Activated B cell treated with CpG ODN at 0.5 μM for 24 hours (primary cell): ENCODE measurements at regions of chr11 and their contacts with region 1.

Region 1: DNA sequence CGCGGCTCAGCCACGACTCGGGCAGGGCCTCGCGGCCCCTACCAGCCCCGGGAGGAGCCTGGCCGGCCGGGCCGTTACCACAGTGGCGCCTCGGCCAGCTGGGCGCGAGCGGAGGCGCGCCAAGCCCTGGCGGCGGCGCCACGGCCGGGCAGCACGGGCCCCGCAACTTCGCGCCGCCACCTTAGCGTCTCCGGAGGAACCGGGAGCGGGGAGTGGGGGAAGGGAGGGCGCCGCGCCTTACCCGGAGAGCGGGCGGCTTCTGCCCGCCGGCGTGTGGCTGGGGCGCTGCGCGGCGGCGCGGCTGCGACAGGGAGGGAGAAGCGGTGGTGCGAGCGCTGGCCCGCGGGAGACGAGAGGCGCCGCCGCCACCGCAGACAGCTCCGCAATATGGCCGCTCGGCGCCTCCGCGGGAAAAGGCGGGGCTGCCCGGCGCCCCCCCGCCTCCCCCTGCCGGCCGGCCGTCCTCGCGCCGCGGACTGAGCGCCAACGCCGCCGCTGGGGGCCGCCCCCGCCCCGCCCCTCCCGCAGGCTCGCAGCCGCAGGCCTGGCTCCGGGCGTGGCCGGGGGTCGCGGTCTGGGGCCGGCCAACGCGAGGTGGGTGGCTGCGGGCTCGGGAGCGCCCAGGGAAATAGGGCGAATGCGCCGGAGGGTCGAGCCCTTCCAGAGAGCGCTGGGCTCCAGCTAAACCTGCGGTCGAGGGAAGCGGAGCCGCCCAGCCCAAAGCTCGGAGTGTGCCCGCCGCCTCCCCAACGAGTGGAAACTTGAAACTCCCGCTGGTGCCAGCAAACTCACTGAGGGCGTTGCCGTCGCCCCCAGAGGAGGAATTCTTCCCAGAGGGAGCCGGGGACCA is at the start of gene RDX:
- DNase-seq: peak; percentile 74
- ATAC-seq: peak; percentile 83
- H3K4me3 Mint-ChIP-seq: peak within 1 kb of the TSS; percentile 87
- H3K27ac Mint-ChIP-seq: peak within 1 kb of the TSS; percentile 71
- H3K4me1 Mint-ChIP-seq: peaks cover 30% of the 10 kb centered on the region
- H3K27me3 Mint-ChIP-seq: no peaks in the 10 kb centered on the region
- CTCF ChIP-seq: no peak
- total RNA-seq, gene RDX: 27.4 and 27.9 TPM in 2 replicates

Region 2: GRCh38 chr11:110195845-110196754 is 100.4 kb before region 1 on chr11:
- CTCF ChIA-PET with region 1: no interaction called
- POLR2A ChIA-PET with region 1: no interaction called
- intact Hi-C with region 1: loop called (anchors 2 kb)
- DNase-seq: no peak
- ATAC-seq: no peak
- H3K4me3 Mint-ChIP-seq: no peak overlapping the region
- H3K27ac Mint-ChIP-seq: no peak overlapping the region
- H3K4me1 Mint-ChIP-seq: peaks cover 11% of the 10 kb centered on the region
- H3K27me3 Mint-ChIP-seq: peaks cover 23% of the 10 kb centered on the region
- CTCF ChIP-seq: no peak

Region 3: GRCh38 chr11:110279881-110280280 is 16.6 kb before region 1 on chr11:
- CTCF ChIA-PET with region 1: no interaction called
- POLR2A ChIA-PET with region 1: interaction called, 5 read pairs
- intact Hi-C with region 1: loop called (anchors 1 kb)
- DNase-seq: no peak
- ATAC-seq: no peak
- H3K4me3 Mint-ChIP-seq: no peak overlapping the region
- H3K27ac Mint-ChIP-seq: no peak overlapping the region
- H3K4me1 Mint-ChIP-seq: no peaks in the 10 kb centered on the region
- H3K27me3 Mint-ChIP-seq: no peaks in the 10 kb centered on the region
- CTCF ChIP-seq: no peak

Region 4: GRCh38 chr11:110311783-110312579 is 15.5 kb after region 1 on chr11:
- CTCF ChIA-PET with region 1: no interaction called
- POLR2A ChIA-PET with region 1: no interaction called
- intact Hi-C with region 1: loop called (anchors 1 kb)
- DNase-seq: no peak
- ATAC-seq: peak; percentile 66
- H3K4me3 Mint-ChIP-seq: no peak overlapping the region
- H3K27ac Mint-ChIP-seq: peak overlapping the region; percentile 41
- H3K4me1 Mint-ChIP-seq: peaks cover 13% of the 10 kb centered on the region
- H3K27me3 Mint-ChIP-seq: no peaks in the 10 kb centered on the region
- CTCF ChIP-seq: no peak

Region 5: DNA sequence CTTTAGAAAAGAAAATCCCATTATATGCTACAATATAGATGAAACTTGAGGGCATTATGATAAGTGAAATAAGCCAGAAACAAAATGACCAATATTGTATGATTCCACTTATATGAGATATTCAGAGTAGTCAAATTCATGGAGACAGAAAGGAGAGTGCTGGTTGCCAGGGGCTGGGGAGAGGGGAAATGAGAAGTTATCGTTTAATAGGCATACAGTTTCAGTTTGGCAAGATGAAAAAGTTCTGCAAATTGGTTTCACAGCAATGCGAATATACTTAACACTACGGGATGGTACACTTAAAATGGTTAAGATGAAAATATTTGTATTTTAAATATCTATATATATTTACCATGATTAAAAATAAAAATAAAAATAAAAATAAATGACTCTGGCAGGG is 31.1 kb after region 1 on chr11:
- CTCF ChIA-PET with region 1: no interaction called
- POLR2A ChIA-PET with region 1: interaction called, 6 read pairs
- intact Hi-C with region 1: loop called (anchors 1 kb)
- DNase-seq: no peak
- ATAC-seq: no peak
- H3K4me3 Mint-ChIP-seq: peak overlapping the region; percentile 77
- H3K27ac Mint-ChIP-seq: peak overlapping the region; percentile 87
- H3K4me1 Mint-ChIP-seq: peaks cover 20% of the 10 kb centered on the region
- H3K27me3 Mint-ChIP-seq: peaks cover 2% of the 10 kb centered on the region
- CTCF ChIP-seq: no peak

Region 6: GRCh38 chr11:110349138-110349996 is 52.9 kb after region 1 on chr11:
- CTCF ChIA-PET with region 1: no interaction called
- POLR2A ChIA-PET with region 1: no interaction called
- intact Hi-C with region 1: loop called (anchors 5 kb)
- DNase-seq: no peak
- ATAC-seq: peak; percentile 81
- H3K4me3 Mint-ChIP-seq: peak overlapping the region; percentile 55
- H3K27ac Mint-ChIP-seq: peak overlapping the region; percentile 71
- H3K4me1 Mint-ChIP-seq: peaks cover 27% of the 10 kb centered on the region
- H3K27me3 Mint-ChIP-seq: no peaks in the 10 kb centered on the region
- CTCF ChIP-seq: no peak

Region 7: DNA sequence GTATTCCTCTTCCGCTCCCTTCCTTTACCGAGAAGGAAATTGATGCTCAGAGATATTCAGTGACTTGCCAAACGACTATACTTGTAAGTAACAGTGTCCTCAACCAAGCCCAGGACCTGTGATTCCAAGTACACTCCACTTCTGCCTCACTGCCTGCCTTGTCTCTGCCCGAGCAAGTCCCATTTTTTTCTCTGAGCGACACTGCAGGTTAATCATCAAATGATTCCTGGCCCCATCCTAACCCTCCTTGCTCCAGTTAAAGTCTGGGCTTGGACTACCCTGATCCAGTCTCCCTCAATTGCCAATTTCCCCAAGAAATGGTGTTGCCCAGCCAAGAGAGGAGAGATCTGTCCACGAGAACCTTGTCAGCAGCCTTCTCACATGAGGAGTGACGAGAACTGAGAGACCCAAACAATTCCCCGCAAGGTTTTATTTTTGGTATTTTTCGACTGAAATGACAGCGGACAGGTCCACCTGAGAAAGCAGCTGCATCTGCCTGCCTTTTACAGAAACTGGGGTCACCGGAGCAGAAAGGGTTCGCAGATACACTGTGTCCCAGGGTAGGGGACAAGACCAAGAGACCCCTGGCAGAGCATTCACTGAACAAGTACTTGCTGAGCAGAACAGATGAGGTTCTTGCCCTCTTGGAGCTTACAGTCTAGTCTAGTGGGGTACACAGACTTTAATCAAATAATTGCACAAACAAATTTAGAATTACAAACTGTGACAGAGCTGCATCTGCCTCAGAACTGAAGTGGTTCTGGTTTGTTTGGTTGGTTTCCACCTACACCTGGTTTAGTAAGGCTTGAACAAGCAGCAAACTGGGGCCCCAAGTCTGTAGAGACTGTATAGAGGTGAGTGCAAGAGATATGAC is 1071.2 kb after region 1 on chr11:
- CTCF ChIA-PET with region 1: no interaction called
- POLR2A ChIA-PET with region 1: interaction called, 10 read pairs
- intact Hi-C with region 1: no loop called
- DNase-seq: no peak
- ATAC-seq: peak; percentile 51
- H3K4me3 Mint-ChIP-seq: peak overlapping the region; percentile 67
- H3K27ac Mint-ChIP-seq: peak overlapping the region; percentile 98
- H3K4me1 Mint-ChIP-seq: no peaks in the 10 kb centered on the region
- H3K27me3 Mint-ChIP-seq: no peaks in the 10 kb centered on the region
- CTCF ChIP-seq: no peak